ENCODE measurements at regions of chr9 and their contacts with region 1.

Region 1: DNA sequence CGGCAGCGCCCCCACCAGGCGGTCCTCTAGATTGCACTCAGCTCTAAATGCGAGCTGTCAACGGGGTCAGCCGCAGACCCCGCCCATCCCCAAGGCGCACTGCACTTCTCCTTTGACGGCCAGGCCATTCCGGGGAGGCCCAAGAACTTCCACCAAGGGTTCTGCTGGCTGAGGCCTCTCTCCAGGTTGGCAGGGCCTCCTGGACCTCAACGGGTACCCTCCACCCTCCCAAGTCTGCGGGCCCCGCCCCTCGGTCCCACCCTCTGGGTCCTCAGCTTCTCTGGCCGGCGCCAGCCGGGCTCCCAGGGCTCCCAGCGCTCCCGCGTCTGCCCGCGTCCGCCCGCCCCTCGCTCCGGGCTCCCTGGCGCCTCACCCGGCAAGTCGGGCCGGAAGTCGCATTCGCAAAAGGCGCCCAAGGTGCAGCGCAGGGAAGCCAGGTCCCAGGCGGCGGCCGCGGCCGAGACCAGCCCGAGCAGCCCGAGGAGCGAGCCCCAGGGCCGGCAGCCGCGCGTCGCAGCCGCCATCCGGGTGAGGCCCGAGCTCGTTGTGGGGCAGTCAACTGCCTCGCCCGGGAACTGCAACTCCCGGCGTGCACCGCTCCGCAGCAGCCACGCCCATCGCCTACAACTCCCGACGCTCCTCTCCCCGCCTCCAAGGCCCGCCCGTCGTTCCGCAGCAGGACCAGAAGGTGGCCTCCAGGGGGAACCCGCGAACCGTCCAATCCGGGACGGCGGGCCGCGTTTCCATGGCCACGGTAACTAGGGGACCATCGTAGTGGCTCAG is at the start of gene TOR2A:
- DNase-seq: peak; percentile 81
- ATAC-seq: peak; percentile 98
- H3K4me3 ChIP-seq: peak within 1 kb of the TSS; percentile 76
- H3K27ac ChIP-seq: peak within 1 kb of the TSS; percentile 71
- H3K4me1 ChIP-seq: peaks cover 6% of the 10 kb centered on the region
- H3K27me3 ChIP-seq: no peaks in the 10 kb centered on the region
- CTCF ChIP-seq: peak; percentile 96 to 99 (median 96)
- EP300 ChIP-seq: peak in 1 of 2 experiments; percentile 62; a peak in 1 of 4 replicates
- POLR2A ChIP-seq: peak; percentile 93
- RAD21 ChIP-seq: peak; percentile 96
- polyA plus RNA-seq, gene TOR2A: 0.52 to 1.6 TPM

Region 2: DNA sequence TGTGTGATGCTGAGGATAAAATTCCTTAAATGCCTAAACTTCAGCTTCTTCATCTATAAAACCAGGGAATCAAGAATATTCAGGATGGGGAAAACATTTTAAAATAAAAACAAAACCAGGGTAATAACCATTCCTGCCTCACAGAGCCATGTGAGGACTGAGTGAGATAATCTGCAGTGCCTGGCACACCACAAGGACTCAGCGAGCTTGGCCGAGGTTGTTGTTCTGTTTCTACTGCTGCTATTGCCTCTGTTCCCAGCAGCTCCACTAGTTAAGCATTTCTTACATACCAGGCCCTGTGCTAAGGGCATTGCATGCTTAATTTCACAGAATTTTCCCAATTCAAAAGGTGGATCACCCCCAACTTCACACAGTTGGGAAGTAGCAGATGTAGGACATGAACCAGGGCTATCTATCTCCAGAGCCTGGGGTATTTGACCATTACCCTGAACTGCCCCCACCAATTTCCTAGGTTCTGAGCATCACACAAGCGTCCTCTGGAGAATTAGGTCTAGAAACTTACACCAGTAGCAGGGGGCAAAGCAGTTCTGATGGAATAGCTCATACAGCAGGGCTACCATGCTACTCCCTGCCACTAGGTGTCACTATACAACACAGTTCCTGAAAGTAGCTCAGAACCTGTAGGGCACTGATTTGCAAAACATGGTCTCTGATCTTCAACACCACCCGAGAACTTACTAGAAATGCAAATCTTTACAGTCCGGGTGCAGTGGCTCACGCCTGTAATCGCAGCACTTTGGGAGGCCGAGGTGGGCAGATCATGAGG is 209.3 kb before region 1 on chr9:
- CTCF ChIA-PET with region 1: interaction called, 11 read pairs
- POLR2A ChIA-PET with region 1: no interaction called
- RAD21 ChIA-PET with region 1: interaction called, 4 read pairs
- SMC1A ChIA-PET with region 1: no interaction called
- in situ Hi-C with region 1: no loop called
- intact Hi-C with region 1: no loop called
- DNase-seq: no peak
- ATAC-seq: peak; percentile 58; the same call in 2 of the 3 replicates
- H3K4me3 ChIP-seq: no peak overlapping the region
- H3K27ac ChIP-seq: no peak overlapping the region
- H3K4me1 ChIP-seq: no peaks in the 10 kb centered on the region
- H3K27me3 ChIP-seq: no peaks in the 10 kb centered on the region
- CTCF ChIP-seq: peak; percentile 26 to 50 (median 44); a peak in 4 of 6 replicates
- EP300 ChIP-seq: no peak
- POLR2A ChIP-seq: no peak
- RAD21 ChIP-seq: no peak

Region 3: DNA sequence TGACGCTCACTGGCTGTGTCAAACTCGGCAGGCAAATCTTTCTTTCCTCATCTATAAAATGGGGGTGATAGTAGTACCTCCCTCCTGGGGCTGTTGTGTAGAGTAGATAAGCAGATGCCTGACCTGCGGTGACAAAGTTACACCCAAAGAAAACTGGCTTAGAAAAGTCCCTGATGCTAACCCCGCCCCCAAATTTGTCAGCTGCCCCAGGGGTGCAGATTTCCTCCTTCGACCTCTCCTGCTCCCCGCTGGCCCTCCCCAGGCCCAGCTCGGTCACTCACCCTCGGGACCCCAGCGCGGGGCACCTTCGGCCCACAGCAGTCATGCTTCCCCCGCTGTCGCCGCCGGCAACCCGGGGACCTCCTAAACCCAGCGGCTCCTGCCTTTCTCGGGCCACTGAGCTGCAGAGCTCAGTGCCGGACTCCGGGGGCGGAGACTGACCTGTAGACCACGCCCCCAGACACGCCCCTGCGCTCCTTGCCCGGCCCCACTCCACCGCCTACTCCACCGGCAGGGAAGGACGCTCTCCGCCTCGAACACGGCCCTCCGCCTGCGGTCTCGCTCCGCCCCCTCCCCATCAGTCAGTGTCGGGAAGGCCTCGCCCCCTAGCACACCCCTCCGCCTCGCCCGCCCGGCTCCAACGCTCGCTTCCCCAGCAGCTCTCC is 36.1 kb after region 1 on chr9:
- CTCF ChIA-PET with region 1: interaction called, 19 read pairs
- POLR2A ChIA-PET with region 1: interaction called, 5 read pairs
- RAD21 ChIA-PET with region 1: interaction called, 23 read pairs
- SMC1A ChIA-PET with region 1: interaction called, 9 read pairs
- in situ Hi-C with region 1: no loop called
- intact Hi-C with region 1: loop called (anchors 2 kb)
- DNase-seq: peak; percentile 90
- ATAC-seq: peak; percentile 95
- H3K4me3 ChIP-seq: peak overlapping the region; percentile 79
- H3K27ac ChIP-seq: peak overlapping the region; percentile 23; the same call in 1 of the 2 replicates
- H3K4me1 ChIP-seq: peaks cover 24% of the 10 kb centered on the region
- H3K27me3 ChIP-seq: no peaks in the 10 kb centered on the region
- CTCF ChIP-seq: no peak
- EP300 ChIP-seq: no peak
- POLR2A ChIP-seq: peak; percentile 78
- RAD21 ChIP-seq: no peak

Region 4: DNA sequence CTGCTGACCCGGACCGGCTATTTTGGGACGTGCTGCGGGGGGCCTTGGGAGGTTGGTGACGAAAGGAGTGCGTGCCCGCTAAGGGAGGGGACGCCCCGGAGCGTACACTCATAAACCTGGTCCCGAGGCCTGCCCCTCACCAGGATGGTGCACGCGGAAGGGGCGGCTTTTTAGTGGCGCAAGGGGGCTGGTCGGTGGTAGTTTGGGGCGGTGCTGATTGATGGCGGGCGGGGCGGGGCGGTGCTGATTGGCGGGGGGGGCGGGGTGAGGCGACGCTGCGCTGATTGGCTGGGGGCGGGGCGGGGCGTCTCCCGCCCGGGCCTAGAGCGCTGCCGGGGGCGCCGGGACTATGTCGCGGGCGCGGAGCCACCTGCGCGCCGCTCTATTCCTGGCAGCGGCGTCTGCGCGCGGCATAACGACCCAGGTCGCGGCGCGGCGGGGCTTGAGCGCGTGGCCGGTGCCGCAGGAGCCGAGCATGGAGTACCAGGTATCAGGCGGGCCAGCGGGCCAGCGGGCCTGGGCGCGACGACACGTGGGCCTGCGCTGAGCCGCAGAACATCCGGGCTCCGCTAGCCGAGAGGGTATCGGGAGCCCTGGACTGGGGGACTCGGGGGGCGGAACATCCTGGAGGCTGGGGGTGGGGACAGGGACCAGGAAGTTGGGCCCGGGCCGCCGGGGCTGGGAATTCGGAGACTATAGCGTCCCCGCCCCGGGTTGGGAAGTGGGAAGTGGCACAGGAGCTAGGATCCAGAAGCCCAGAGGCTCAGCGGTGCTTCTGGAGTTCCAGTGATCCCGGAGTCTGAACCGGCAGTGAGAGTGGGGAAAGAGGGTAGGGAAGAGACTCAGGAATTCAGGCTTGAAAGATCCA is 67.9 kb after region 1 on chr9 and contains the start of gene FPGS:
- CTCF ChIA-PET with region 1: interaction called, 7 read pairs
- POLR2A ChIA-PET with region 1: interaction called, 6 read pairs
- RAD21 ChIA-PET with region 1: interaction called, 10 read pairs
- SMC1A ChIA-PET with region 1: interaction called, 3 read pairs
- in situ Hi-C with region 1: no loop called
- intact Hi-C with region 1: no loop called
- DNase-seq: peak; percentile 49
- ATAC-seq: peak; percentile 91
- H3K4me3 ChIP-seq: peak within 1 kb of the TSS; percentile 85
- H3K27ac ChIP-seq: peak within 1 kb of the TSS; percentile 97
- H3K4me1 ChIP-seq: peaks cover 16% of the 10 kb centered on the region
- H3K27me3 ChIP-seq: no peaks in the 10 kb centered on the region
- CTCF ChIP-seq: no peak
- EP300 ChIP-seq: no peak
- POLR2A ChIP-seq: peak; percentile 93
- RAD21 ChIP-seq: no peak
- polyA plus RNA-seq, gene FPGS: 1.2 to 8.2 TPM

Region 5: DNA sequence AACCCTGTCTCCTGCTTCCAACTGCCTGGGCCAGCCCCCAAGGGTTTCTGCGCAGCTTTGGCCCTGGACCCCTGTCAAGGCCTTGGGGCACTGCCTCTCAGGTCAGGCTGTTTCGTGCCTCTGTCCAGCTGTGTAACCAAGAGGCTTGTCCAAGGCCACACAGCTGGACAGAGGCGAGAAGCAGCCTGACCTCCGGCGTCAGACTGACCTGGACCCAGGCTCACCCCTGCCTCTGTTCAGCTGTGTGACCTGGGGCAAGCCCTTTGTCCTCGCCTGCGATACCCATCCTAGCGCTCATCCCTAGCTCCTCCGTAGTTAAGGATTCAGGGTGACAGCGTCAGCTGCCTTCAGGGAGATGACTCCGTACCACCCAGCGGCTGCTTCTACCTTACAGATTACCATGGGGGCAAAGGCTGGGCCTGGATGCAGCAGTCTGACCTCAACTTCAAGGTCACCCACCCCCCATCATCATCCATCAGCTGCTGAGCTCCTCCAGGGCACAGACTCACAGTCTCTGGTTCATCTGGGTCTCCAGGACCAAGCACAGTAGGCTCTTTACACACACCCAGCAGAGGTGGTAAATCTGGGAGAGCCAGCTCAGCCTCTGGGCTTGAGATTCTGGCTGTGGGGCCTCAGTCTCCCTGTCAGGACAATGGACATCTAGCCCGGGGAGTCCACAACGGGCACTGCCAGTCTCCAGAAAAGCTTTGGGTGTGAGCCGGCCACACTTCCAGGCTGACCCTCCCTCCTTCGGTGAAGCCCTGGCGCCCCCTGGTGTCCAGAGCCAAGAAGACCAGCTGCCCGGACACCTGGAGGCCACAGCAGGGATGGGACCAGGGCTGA is 134.6 kb after region 1 on chr9:
- CTCF ChIA-PET with region 1: interaction called, 44 read pairs
- POLR2A ChIA-PET with region 1: interaction called, 5 read pairs
- RAD21 ChIA-PET with region 1: interaction called, 44 read pairs
- SMC1A ChIA-PET with region 1: interaction called, 12 read pairs
- in situ Hi-C with region 1: no loop called
- intact Hi-C with region 1: loop called (anchors 1 kb)
- DNase-seq: no peak
- ATAC-seq: peak; percentile 96
- H3K4me3 ChIP-seq: no peak overlapping the region
- H3K27ac ChIP-seq: no peak overlapping the region
- H3K4me1 ChIP-seq: peaks cover 22% of the 10 kb centered on the region
- H3K27me3 ChIP-seq: no peaks in the 10 kb centered on the region
- CTCF ChIP-seq: peak; percentile 87 to 98 (median 91)
- EP300 ChIP-seq: no peak
- POLR2A ChIP-seq: no peak
- RAD21 ChIP-seq: peak; percentile 99

Region 6: DNA sequence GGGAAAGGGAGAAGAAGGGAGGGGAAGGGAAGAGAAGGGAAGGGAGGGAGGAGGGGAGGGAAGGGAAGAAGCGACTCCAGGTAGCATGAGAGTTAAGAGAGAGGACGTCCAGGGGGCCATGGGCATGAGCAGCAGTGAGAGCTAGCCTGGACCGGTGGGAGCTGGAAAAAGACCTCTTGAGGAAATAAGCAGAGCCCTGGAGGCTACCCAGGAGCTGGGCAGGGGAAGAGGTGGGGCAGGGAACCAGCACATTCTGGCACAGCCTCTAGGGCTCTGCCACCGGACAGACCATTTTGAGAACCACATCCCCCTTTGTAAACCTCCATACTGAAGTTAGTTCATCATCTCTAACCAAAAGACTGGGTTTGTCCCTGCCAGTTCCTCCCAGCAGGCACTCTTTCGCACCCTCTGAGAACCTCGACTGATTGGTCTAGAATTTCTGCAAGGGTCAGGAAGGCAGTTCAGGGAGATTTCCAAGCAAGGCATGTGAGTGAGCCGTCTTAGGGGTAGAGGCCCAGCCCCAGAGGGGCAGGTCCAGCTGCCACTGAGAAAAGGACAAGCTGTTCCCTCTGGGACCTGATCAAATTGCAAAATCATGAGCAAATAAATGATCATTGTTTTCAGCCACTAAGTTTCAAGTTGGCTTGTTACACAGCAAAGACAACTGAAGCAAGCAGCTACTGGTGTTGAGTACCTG is 320.6 kb after region 1 on chr9:
- CTCF ChIA-PET with region 1: no interaction called
- POLR2A ChIA-PET with region 1: no interaction called
- RAD21 ChIA-PET with region 1: no interaction called
- SMC1A ChIA-PET with region 1: no interaction called
- in situ Hi-C with region 1: no loop called
- intact Hi-C with region 1: no loop called
- DNase-seq: no peak
- ATAC-seq: peak; percentile 32; the same call in 2 of the 3 replicates
- H3K4me3 ChIP-seq: no peak overlapping the region
- H3K27ac ChIP-seq: no peak overlapping the region
- H3K4me1 ChIP-seq: no peaks in the 10 kb centered on the region
- H3K27me3 ChIP-seq: no peaks in the 10 kb centered on the region; a peak in 1 of 4 replicates
- CTCF ChIP-seq: no peak
- EP300 ChIP-seq: no peak
- POLR2A ChIP-seq: no peak
- RAD21 ChIP-seq: no peak

Region 7: GRCh38 chr9:128175102-128175563 is 440.2 kb after region 1 on chr9:
- CTCF ChIA-PET with region 1: no interaction called
- POLR2A ChIA-PET with region 1: no interaction called
- RAD21 ChIA-PET with region 1: no interaction called
- SMC1A ChIA-PET with region 1: no interaction called
- in situ Hi-C with region 1: no loop called
- intact Hi-C with region 1: no loop called
- DNase-seq: no peak
- ATAC-seq: no peak
- H3K4me3 ChIP-seq: no peak overlapping the region
- H3K27ac ChIP-seq: no peak overlapping the region
- H3K4me1 ChIP-seq: no peaks in the 10 kb centered on the region
- H3K27me3 ChIP-seq: no peaks in the 10 kb centered on the region
- CTCF ChIP-seq: no peak
- EP300 ChIP-seq: no peak
- POLR2A ChIP-seq: no peak
- RAD21 ChIP-seq: no peak

Measured in GM12878 (cell line).